ENCODE measurements at regions of chr2 and their contacts with region 1.

Region 1: DNA sequence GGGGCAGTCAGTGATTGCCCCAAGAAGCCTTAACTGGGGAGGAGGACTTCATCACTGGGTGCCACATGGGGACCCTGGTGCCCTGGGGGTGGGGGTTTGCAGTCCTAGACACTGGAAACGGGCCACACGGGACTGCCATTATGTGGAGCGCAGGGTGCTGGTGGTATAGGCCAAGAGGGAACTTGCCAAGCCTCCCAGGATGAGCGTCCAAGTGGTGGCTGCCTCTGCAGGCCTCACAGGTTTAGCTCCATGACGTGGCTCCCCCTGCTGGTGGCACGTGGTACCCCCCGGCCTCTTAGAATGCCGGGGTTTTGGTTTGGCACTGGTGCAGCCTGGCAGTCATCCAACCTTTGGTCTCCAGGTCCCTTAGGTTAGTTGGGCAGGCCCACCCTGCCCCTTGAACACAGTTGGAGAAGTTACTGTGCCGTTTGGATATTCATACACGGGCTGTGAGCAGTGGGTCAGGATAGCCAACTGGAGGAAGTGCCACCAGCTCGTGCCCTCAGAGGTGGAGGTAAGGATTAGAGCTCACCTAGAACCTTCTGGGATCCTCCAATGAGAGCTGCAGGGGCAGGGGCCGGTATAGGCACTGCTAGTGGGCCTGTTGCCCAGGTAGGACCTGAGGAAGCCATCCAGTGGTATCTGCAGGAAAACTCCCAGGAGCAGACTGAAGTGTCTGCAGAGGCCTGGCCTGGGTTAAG is 5.6 kb downstream of the PTMA start:
- DNase-seq: peak; percentile 86 to 93 (median 87)
- H3K4me3 ChIP-seq: no peak overlapping the region
- H3K4me3 Mint-ChIP-seq: peak overlapping the region in 6 of 7 donors; percentile 51 to 90 (median 66)
- H3K27ac ChIP-seq: peak overlapping the region; percentile 18
- H3K27ac Mint-ChIP-seq: peak overlapping the region; percentile 86 to 99 (median 96)
- H3K4me1 ChIP-seq: peaks cover 39% of the 10 kb centered on the region
- H3K4me1 Mint-ChIP-seq: peaks cover 31 to 39% (median 37%) of the 10 kb centered on the region in 3 donors
- H3K27me3 ChIP-seq: no peaks in the 10 kb centered on the region
- H3K27me3 Mint-ChIP-seq: peaks cover 0 to 28% of the 10 kb centered on the region in 2 donors

Region 2: GRCh38 chr2:231592636-231593145 is 121.2 kb before region 1 on chr2 and contains the start of gene TEX44:
- CTCF ChIA-PET with region 1: no interaction called
- POLR2A ChIA-PET with region 1: no interaction called
- DNase-seq: no peak
- H3K4me3 ChIP-seq: no peak within 1 kb of the TSS
- H3K4me3 Mint-ChIP-seq: no peak within 1 kb of the TSS
- H3K27ac ChIP-seq: no peak within 1 kb of the TSS
- H3K27ac Mint-ChIP-seq: peak within 1 kb of the TSS in 1 of 8 donors; percentile 29
- H3K4me1 ChIP-seq: no peaks in the 10 kb centered on the region
- H3K4me1 Mint-ChIP-seq: no peaks in the 10 kb centered on the region
- H3K27me3 ChIP-seq: no peaks in the 10 kb centered on the region
- H3K27me3 Mint-ChIP-seq: peaks cover 0 to 1% of the 10 kb centered on the region in 2 donors
- total RNA-seq, gene TEX44: not detected

Region 3: GRCh38 chr2:231604685-231605606 is 108.9 kb before region 1 on chr2:
- CTCF ChIA-PET with region 1: interaction called, 131 read pairs
- POLR2A ChIA-PET with region 1: interaction called, 4 read pairs
- DNase-seq: peak; percentile 91 to 99 (median 97)
- H3K4me3 ChIP-seq: peak overlapping the region; percentile 49
- H3K4me3 Mint-ChIP-seq: peak overlapping the region; percentile 60 to 87 (median 74)
- H3K27ac ChIP-seq: peak overlapping the region; percentile 87
- H3K27ac Mint-ChIP-seq: peak overlapping the region; percentile 71 to 97 (median 94)
- H3K4me1 ChIP-seq: peaks cover 8% of the 10 kb centered on the region
- H3K4me1 Mint-ChIP-seq: peaks cover 5 to 15% (median 11%) of the 10 kb centered on the region in 3 donors
- H3K27me3 ChIP-seq: no peaks in the 10 kb centered on the region
- H3K27me3 Mint-ChIP-seq: peaks cover 0 to 1% of the 10 kb centered on the region in 2 donors

Region 4: GRCh38 chr2:231621129-231621879 is 92.6 kb before region 1 on chr2:
- CTCF ChIA-PET with region 1: interaction called, 11 read pairs
- POLR2A ChIA-PET with region 1: no interaction called
- DNase-seq: no peak
- H3K4me3 ChIP-seq: no peak overlapping the region
- H3K4me3 Mint-ChIP-seq: peak overlapping the region in 1 of 7 donors; percentile 56
- H3K27ac ChIP-seq: no peak overlapping the region
- H3K27ac Mint-ChIP-seq: peak overlapping the region in 3 of 8 donors; percentile 17 to 92 (median 18)
- H3K4me1 ChIP-seq: no peaks in the 10 kb centered on the region
- H3K4me1 Mint-ChIP-seq: peaks cover 2 to 11% (median 5%) of the 10 kb centered on the region in 3 donors
- H3K27me3 ChIP-seq: no peaks in the 10 kb centered on the region
- H3K27me3 Mint-ChIP-seq: peaks cover 1 to 2% of the 10 kb centered on the region in 2 donors

Region 5: GRCh38 chr2:231655897-231656296 is 58.0 kb before region 1 on chr2:
- CTCF ChIA-PET with region 1: interaction called, 23 read pairs
- POLR2A ChIA-PET with region 1: interaction called, 48 read pairs
- DNase-seq: no peak
- H3K4me3 ChIP-seq: no peak overlapping the region
- H3K4me3 Mint-ChIP-seq: no peak overlapping the region
- H3K27ac ChIP-seq: no peak overlapping the region
- H3K27ac Mint-ChIP-seq: peak overlapping the region in 2 of 8 donors; percentile 36 to 52
- H3K4me1 ChIP-seq: no peaks in the 10 kb centered on the region
- H3K4me1 Mint-ChIP-seq: no peaks in the 10 kb centered on the region
- H3K27me3 ChIP-seq: no peaks in the 10 kb centered on the region
- H3K27me3 Mint-ChIP-seq: peaks cover 0 to 7% of the 10 kb centered on the region in 2 donors

Region 6: DNA sequence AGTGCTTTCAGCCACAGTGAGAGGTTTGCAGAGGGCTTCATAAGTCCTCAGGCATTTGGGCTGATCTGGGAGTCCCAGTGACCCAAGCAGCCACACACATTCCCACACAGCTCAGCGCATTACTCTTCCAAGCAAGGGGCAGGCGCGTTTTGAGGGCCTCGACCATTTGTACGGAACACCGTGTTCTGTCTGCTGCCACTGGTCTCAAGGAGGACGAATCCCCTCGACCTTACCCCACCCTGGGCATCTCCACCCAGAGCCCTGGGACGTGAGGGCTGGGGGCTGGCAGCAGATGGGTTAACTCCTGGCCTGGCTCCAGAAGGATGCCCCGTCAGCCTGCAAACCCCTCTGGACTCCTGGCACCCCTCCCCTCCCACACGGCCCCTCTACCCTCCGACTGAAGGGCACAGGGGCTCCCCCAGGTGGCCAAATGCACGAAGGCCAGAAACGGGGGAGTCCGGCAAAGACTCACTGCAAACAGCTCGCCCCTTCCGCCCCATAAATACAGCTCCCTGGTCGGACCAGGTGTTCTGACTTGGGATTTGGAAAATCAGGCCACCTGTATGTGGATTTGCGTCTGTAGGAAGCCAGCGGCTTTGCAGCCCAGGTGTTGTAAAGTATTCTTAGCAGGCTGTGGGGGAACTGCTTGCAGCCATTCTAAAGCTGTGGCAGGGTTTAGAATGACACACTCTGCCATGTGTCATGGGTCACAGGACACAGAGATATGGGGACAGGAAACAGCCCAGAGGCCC is 39.1 kb before region 1 on chr2:
- CTCF ChIA-PET with region 1: interaction called, 357 read pairs
- POLR2A ChIA-PET with region 1: interaction called, 26 read pairs
- DNase-seq: peak; percentile 15 to 64 (median 32)
- H3K4me3 ChIP-seq: no peak overlapping the region
- H3K4me3 Mint-ChIP-seq: no peak overlapping the region
- H3K27ac ChIP-seq: no peak overlapping the region
- H3K27ac Mint-ChIP-seq: peak overlapping the region in 2 of 8 donors; percentile 29 to 60
- H3K4me1 ChIP-seq: peaks cover 7% of the 10 kb centered on the region
- H3K4me1 Mint-ChIP-seq: peaks cover 2 to 8% (median 5%) of the 10 kb centered on the region in 3 donors
- H3K27me3 ChIP-seq: no peaks in the 10 kb centered on the region
- H3K27me3 Mint-ChIP-seq: peaks cover 0 to 4% of the 10 kb centered on the region in 2 donors

Region 7: DNA sequence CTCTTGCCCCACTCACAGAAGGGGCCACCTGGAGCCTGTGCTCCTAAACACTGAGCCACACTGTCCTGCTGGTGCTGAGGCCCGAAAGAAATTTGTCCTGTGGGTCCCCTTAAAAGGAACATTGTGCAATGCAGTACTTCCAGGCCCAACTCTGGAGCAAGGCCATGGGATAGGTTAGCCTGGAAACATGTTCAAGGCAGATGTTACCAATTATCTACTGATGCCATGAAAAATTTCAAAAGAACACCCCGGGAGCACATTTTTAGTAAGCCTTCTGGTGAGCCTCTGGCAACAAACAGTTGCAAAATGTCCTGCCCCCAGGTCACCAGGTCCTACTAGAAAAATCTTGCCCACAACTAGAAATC is 17.9 kb before region 1 on chr2:
- CTCF ChIA-PET with region 1: interaction called, 209 read pairs
- POLR2A ChIA-PET with region 1: interaction called, 4 read pairs
- DNase-seq: no peak
- H3K4me3 ChIP-seq: no peak overlapping the region
- H3K4me3 Mint-ChIP-seq: no peak overlapping the region
- H3K27ac ChIP-seq: no peak overlapping the region
- H3K27ac Mint-ChIP-seq: no peak overlapping the region
- H3K4me1 ChIP-seq: no peaks in the 10 kb centered on the region
- H3K4me1 Mint-ChIP-seq: no peaks in the 10 kb centered on the region
- H3K27me3 ChIP-seq: no peaks in the 10 kb centered on the region
- H3K27me3 Mint-ChIP-seq: peaks cover 0 to 2% of the 10 kb centered on the region in 2 donors